ENCODE measurements at regions of chr2 and their contacts with region 1.

Region 1: DNA sequence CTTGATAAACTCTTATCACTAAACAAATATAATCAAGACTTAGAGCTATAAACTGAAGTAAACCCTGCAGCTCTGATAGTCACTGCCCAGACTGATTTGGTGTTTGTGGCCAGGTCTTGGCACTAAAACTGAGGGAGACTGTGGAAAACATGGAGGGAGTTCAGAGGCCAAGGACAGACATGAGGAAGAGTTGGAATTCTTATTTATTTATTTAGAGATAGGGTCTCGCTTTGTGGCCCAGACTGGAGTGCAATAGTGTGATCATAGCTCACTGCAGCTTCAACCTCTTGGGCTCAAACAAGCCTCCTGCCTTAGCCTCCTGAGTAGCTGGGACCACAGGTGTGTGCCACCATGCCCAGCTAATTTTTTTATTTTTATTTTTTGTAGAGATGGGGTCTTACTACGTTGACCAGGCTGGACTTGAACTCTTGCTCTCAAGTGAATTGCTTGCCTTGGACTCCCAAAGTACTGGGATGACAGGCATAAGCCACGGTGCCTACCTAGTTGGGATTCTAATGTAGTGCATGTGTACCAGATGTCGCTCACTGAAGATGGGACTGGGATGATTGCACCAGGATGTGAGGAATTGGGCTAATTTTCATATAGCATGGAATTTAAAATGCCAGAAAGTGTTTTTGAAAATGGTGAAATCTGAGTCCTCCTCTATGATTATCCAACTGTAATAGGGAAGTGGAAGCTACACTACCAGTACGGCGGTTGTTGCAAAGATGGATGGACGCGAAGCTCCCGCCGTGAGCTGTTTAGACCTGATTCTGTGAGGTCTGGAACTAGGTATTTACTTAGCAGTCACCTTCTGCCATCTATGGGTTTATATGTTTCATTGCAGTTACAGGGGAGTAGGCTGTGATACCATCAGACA is 52.7 kb upstream of the CTLA4 start:
- DNase-seq: peak; percentile 50
- ATAC-seq: peak; percentile 98
- H3K4me3 Mint-ChIP-seq: no peak overlapping the region
- H3K27ac Mint-ChIP-seq: no peak overlapping the region
- H3K4me1 Mint-ChIP-seq: peaks cover 11% of the 10 kb centered on the region
- H3K27me3 Mint-ChIP-seq: no peaks in the 10 kb centered on the region
- CTCF ChIP-seq: no peak

Region 2: GRCh38 chr2:202588647-202589581 is 1226.0 kb before region 1 on chr2:
- CTCF ChIA-PET with region 1: interaction called, 12 read pairs
- POLR2A ChIA-PET with region 1: no interaction called
- DNase-seq: peak; percentile 71
- ATAC-seq: peak; percentile 97
- H3K4me3 Mint-ChIP-seq: peak overlapping the region; percentile 12
- H3K27ac Mint-ChIP-seq: no peak overlapping the region
- H3K4me1 Mint-ChIP-seq: peaks cover 17% of the 10 kb centered on the region
- H3K27me3 Mint-ChIP-seq: no peaks in the 10 kb centered on the region; the same call in 1 of the 2 replicates
- CTCF ChIP-seq: peak; percentile 84

Region 3: GRCh38 chr2:203470371-203470770 is 344.5 kb before region 1 on chr2:
- CTCF ChIA-PET with region 1: interaction called, 13 read pairs
- POLR2A ChIA-PET with region 1: no interaction called
- DNase-seq: no peak
- ATAC-seq: peak; percentile 78
- H3K4me3 Mint-ChIP-seq: no peak overlapping the region
- H3K27ac Mint-ChIP-seq: no peak overlapping the region
- H3K4me1 Mint-ChIP-seq: no peaks in the 10 kb centered on the region
- H3K27me3 Mint-ChIP-seq: no peaks in the 10 kb centered on the region
- CTCF ChIP-seq: no peak

Region 4: DNA sequence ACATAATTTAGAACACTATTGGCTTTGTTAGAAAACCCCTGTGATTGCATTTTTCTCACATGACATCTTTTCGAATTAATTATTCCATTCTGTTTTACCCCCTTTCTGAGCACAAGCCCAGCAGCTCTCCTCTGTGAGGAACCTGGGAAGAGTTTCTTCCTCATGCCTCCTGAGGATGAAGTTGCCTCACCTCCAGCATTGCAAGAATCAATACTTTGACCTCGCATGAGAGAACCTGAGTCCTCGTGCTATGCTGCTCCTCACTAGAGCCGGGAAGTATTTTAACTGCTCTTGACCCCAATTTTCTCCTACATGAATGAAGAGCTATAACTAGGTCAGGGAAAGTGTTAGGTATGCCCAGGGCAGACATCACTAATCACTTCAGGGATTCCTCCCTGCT is 202.6 kb before region 1 on chr2:
- CTCF ChIA-PET with region 1: interaction called, 14 read pairs
- POLR2A ChIA-PET with region 1: no interaction called
- DNase-seq: no peak
- ATAC-seq: no peak
- H3K4me3 Mint-ChIP-seq: no peak overlapping the region
- H3K27ac Mint-ChIP-seq: no peak overlapping the region
- H3K4me1 Mint-ChIP-seq: peaks cover 2% of the 10 kb centered on the region; the same call in 1 of the 2 replicates
- H3K27me3 Mint-ChIP-seq: no peaks in the 10 kb centered on the region
- CTCF ChIP-seq: no peak

Region 5: DNA sequence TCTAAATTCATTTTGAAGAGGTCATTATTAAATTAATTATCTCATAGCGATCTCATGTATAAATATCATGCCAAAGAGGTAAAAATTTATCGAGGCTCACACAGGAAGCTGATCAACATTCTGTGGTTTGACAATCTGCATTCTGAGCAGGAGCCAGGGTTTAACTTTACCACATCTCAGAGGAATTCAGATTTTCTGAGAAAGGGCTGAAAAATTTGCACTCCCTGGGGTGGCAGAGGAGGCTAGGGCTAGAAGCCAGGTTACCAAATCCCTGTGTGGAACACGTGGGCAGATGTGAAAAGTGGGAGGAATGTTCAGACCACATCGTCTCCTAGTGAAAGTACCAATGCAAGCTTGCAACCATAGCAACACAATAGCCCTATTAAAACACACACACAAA is 10.8 kb before region 1 on chr2:
- CTCF ChIA-PET with region 1: interaction called, 11 read pairs
- POLR2A ChIA-PET with region 1: no interaction called
- DNase-seq: no peak
- ATAC-seq: no peak
- H3K4me3 Mint-ChIP-seq: no peak overlapping the region
- H3K27ac Mint-ChIP-seq: no peak overlapping the region
- H3K4me1 Mint-ChIP-seq: peaks cover 6% of the 10 kb centered on the region; the same call in 1 of the 2 replicates
- H3K27me3 Mint-ChIP-seq: no peaks in the 10 kb centered on the region
- CTCF ChIP-seq: no peak